ENCODE measurements at regions of chr6 and their contacts with region 1.

Region 1: DNA sequence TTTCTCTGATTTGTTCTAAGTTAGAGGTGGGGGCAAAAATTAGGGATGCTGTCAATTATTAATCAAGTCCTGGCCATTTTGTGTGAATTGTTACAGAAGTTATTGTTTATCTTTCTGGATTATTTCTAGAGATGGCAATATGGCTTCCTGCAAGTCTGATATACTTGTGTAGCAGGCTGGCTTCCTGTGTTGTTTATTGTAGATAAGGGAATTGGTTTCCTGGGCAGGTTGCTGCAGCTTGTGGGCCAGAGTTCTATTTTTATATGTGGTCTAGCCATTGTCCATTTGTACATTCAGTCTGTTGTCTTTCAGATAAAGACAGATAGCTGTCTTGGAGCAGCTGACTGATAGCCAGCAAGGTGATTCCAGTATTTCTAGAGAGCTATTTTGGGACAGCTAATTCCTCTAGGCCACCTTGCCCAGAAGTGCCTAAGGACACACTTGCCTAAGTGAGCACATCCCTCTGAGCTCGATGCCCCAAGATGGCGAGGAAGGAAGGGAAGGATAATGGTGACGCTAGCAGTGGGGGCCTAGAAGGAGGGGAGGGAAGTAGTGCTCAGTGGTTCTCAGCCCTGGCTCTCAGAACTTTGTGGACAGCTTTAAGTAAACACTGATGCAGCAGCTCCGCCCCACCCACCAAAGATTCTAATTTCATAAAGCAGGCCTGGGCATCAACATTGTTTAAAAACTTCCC is 25.5 kb downstream of the DDO start:
- DNase-seq: no peak
- ATAC-seq: no peak
- H3K4me3 ChIP-seq: no peak overlapping the region
- H3K27ac ChIP-seq: no peak overlapping the region
- H3K4me1 ChIP-seq: no peaks in the 10 kb centered on the region
- H3K27me3 ChIP-seq: peaks cover 6% of the 10 kb centered on the region
- CTCF ChIP-seq: no peak
- POLR2A ChIP-seq: no peak
- RAD21 ChIP-seq: no peak

Region 2: DNA sequence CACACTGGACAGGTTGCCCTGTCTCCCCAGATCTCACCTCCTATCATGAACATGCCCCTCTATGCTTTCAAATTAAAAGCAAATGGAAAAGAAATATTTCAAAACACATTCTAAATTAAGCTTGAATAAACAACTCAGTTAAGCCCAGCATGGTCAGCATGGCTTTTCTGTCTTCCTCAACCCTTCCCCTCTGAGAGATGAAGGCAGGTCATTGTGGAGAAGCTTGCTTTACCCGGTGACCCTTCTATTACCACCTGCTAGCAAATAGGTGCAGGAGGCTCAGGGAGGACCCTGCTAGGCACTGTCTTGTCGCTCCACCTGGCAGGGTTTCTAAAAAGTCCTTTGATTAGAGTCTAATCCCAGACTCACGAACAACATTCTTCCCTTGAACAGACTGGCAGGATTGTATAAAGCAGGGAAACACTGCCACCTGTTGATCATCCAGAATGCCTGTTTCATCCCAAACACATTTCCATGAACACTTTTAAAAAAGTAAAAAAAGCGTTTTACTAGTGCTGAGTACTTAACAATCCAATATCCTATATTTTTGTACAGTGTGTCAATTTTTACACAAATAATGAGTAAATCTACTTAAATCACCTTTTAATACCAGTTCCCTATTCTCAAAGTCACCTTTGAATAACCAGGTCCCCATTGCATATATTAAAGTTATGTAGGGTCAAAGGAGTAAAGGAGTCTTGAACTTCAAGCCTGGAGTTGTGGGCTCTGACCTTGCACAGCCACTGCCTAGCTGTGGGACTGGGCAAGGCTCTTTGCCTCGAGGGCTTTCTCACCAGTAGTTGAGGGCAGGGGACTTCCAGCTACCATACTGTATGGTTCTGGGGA is 336.2 kb before region 1 on chr6:
- CTCF ChIA-PET with region 1: interaction called, 4 read pairs
- POLR2A ChIA-PET with region 1: no interaction called
- dilution Hi-C with region 1: no loop called
- in situ Hi-C with region 1: loop called (anchors 5 kb)
- intact Hi-C with region 1: loop called (anchors 1 kb)
- DNase-seq: peak; percentile 68
- ATAC-seq: peak; percentile 79
- H3K4me3 ChIP-seq: no peak overlapping the region
- H3K27ac ChIP-seq: no peak overlapping the region
- H3K4me1 ChIP-seq: no peaks in the 10 kb centered on the region
- H3K27me3 ChIP-seq: peaks cover 29% of the 10 kb centered on the region
- CTCF ChIP-seq: peak; percentile 91
- POLR2A ChIP-seq: no peak
- RAD21 ChIP-seq: peak; percentile 80

Measured in IMR-90 (cell line).